Astrocyte of the cerebellum (primary cell): ENCODE measurements at regions of chr13 and their contacts with region 1.

Region 1: GRCh38 chr13:95003019-95003813 is 290.9 kb upstream of the SOX21 start:
- DNase-seq: no peak
- H3K4me3 ChIP-seq: peak overlapping the region; percentile 33
- CTCF ChIP-seq: peak; percentile 0

Region 2: DNA sequence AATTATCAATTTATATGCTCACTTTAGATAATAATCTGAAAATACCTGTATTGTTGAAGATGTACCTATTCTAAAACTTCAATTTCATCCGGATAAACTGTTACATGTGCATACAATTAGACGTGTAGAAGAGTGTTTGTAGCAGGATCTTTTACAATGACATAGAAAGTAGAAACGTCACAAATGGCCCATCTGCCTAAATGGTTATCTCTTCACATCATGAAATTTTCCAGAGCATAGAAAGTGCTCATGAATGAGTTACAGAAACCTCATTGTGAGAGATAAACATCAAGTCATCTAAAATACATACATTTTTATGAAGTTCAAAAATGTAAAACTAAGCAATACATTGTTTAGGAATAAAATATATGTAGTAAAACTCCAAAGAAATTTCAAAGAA is 1169.2 kb before region 1 on chr13:
- in situ Hi-C with region 1: no loop called
- DNase-seq: no peak
- H3K4me3 ChIP-seq: no peak overlapping the region
- CTCF ChIP-seq: no peak

Region 3: DNA sequence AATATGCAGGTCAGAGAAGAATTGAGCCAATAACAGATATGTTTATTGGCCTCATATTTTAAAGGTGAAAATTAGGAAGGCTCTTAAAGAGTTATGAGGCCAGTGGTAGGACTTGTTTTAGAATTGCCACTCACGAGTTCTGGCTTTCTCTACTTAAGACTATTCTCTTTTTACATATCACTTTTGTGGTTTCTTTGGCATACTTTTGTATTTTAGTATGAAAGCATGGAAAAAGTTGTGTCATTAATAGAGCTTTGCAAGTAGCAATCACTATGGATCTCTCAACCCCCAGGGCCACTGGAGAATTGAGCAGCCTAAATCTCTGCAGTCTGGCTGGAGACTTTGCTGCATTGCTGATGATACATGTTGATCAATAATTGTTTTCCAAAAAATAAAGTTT is 226.3 kb before region 1 on chr13:
- in situ Hi-C with region 1: no loop called
- DNase-seq: no peak
- H3K4me3 ChIP-seq: no peak overlapping the region
- CTCF ChIP-seq: no peak

Region 4: GRCh38 chr13:94947965-94948371 is 55.2 kb before region 1 on chr13:
- in situ Hi-C with region 1: loop called (anchors 5 kb)
- DNase-seq: peak; percentile 65
- H3K4me3 ChIP-seq: no peak overlapping the region
- CTCF ChIP-seq: no peak

Region 5: DNA sequence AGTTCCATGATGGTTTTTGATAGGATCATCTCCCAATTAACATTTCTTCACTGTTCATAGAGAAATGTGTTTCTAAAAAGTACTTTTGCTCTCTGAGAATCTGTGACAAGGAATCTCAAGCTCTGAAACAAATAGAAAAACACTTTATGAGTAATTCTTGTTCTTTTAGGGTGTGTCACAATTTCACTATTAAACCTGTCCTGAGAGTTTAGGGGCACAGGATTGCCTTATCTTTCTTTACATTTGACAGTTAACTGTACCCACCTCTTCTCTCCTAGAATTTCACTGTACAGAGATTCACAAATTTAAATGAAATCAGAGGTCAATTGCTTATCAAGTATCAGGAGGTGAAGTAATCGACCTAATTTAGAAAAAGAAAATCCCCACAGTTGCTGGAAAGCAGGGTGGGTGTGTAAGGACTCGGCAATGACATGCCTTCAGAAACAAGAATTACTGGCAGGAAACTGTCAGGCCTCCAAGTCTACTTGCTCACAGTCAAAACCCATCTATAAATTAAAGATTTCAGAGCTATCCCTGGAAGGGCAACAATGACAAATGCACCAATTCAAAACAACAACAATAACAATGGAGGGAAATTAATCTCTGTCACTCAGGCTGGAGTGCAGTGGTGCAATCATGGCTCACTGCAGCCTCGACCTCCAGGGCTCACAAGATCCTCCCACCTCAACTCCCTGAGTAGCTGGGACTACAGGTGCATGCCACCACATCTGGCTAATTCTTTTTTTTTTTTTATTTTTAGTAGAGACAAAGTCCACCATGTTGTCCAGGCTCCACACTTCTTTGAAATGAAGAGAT is 47.8 kb after region 1 on chr13:
- in situ Hi-C with region 1: no loop called
- DNase-seq: no peak
- H3K4me3 ChIP-seq: no peak overlapping the region
- CTCF ChIP-seq: no peak